Mucosa of descending colon (tissue), 3 donors: ENCODE measurements at regions of chr5 and their contacts with region 1.

Region 1: DNA sequence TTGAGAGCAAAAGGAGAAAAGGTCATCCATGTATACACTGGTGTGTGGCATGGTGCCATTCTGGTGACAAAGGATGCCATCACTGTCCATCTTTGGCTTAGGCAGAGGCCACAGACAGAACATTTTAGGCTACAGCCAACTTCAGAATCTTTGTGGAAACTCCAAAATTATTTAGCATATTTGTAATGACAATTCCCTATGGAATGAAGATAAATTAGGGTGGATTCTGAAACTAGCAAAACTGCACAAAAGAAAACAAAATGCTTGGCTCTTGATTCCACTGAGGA is 92.5 kb downstream of the FBXW11 start:
- DNase-seq: no peak
- ATAC-seq: no peak
- H3K4me3 ChIP-seq: no peak overlapping the region
- H3K4me1 ChIP-seq: peaks cover 5% of the 10 kb centered on the region
- CTCF ChIP-seq: no peak

Region 2: DNA sequence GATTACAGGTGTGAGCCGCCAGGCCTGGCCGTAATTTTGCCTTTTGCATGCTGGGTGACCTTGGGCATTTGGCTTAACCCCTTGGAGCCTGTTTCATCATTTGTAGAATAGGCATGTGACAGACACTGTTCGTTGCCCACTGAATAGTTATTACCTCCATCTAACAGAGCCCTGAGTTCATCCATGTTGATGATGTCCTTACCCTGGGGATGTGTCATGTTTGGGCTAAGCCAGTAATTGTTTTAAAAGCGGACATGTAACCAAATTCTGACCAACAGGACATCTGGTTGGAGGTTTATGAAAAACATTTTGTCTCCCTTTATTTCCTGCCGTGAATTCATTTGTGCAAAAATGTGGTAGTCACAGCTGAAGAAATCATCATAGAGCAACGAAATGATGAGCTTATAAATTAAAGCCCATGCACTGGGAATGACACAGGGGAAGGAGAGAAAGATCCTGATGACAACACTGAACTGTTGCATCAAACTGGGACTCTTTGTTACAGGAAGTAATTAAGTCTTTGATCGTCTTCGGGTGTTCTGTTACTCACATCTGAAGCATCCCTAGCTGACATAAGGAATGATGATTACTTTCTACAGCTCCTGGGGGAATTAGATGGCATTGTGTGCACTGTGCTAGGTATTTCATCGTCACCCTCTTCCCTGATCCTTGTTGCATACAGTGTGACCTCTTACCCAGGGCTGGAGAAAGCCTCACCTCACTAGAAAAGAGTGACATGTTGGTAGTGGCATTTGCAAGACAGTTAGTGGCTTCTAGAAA is 376.7 kb before region 1 on chr5:
- intact Hi-C with region 1: no loop called
- DNase-seq: no peak
- ATAC-seq: no peak
- H3K4me3 ChIP-seq: no peak overlapping the region
- H3K4me1 ChIP-seq: no peaks in the 10 kb centered on the region
- CTCF ChIP-seq: no peak

Region 3: GRCh38 chr5:172035039-172035438 is 121.1 kb after region 1 on chr5:
- intact Hi-C with region 1: loop called (anchors 2 to 5 kb)
- DNase-seq: no peak
- ATAC-seq: peak; percentile 40
- H3K4me3 ChIP-seq: no peak overlapping the region
- H3K4me1 ChIP-seq: no peaks in the 10 kb centered on the region
- CTCF ChIP-seq: no peak

Region 4: DNA sequence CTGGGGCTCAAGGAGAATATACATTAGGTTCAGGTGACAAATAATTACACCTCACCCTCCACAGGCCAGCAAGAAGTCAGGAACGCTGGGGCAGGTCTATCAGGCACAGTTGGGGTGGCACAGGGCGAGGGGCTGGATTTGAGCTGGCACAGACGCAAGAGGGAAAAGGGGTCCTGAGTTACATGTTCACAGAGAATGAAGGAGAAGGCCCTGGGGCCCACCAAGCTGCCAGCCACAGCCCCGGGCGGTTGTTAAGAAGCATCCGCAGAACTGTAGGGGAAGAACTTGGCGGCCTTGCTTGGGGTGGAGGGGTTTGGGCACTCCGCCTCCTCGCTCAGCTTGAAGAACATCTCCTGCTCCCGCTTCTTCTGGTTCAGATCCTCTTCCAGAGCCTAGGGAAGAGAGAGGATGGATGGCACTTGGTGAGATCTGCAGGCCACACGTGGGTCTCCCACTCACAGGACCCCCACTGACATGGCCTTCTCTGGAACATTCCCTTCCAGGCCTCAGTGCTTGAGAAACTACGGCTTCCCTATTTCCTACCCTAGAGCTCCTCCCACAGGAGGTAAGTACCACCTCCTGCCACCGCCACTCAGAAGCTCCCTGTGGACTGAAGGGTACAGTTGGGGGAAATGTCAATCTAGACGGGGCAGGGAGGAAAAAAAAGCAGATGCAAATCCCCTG is 130.8 kb after region 1 on chr5:
- intact Hi-C with region 1: loop called (anchors 2 to 5 kb)
- DNase-seq: no peak
- ATAC-seq: no peak
- H3K4me3 ChIP-seq: no peak overlapping the region
- H3K4me1 ChIP-seq: no peaks in the 10 kb centered on the region
- CTCF ChIP-seq: no peak